ENCODE measurements at regions of chr11 and their contacts with region 1.

Region 1: DNA sequence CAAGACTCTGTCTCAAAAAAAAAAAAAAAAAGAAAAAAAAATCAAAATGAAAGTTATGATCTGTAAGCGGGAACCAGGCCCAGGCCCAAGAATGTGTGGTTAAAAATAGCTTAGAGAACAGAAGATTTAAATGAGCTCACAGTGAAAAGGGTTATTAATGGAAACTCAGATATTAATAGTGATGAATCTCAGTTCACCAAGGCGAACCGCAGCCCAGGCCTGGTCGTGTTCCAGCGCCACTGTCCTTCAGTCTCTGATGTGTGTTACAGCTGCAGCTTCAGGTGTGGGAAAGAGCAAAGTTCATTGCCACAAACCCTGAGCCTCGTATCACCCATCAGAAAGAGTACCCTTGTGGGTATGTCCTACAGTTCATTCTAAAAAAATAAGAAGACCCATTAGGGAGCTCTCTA is 107.1 kb downstream of the GAB2 start:
- DNase-seq: peak; percentile 12 to 40
- ATAC-seq: peak; percentile 76 to 81
- H3K4me3 ChIP-seq: peak overlapping the region in 3 of 4 donors; percentile 23 to 36 (median 33)
- H3K27ac ChIP-seq: peak overlapping the region in 3 of 4 donors; percentile 44 to 76 (median 58)
- H3K4me1 ChIP-seq: peaks cover 31 to 40% of the 10 kb centered on the region in 2 donors
- H3K27me3 ChIP-seq: no peaks in the 10 kb centered on the region
- CTCF ChIP-seq: no peak
- POLR2A ChIP-seq: no peak

Region 2: GRCh38 chr11:77695417-77695816 is 615.1 kb before region 1 on chr11:
- in situ Hi-C with region 1: no loop called
- intact Hi-C with region 1: no loop called
- DNase-seq: no peak
- ATAC-seq: peak; percentile 68 to 69
- H3K4me3 ChIP-seq: no peak overlapping the region
- H3K27ac ChIP-seq: peak overlapping the region; percentile 36 to 60 (median 42)
- H3K4me1 ChIP-seq: peaks cover 0 to 4% of the 10 kb centered on the region in 2 donors
- H3K27me3 ChIP-seq: no peaks in the 10 kb centered on the region
- CTCF ChIP-seq: no peak
- POLR2A ChIP-seq: no peak

Region 3: GRCh38 chr11:78295991-78296935 is 14.2 kb before region 1 on chr11:
- in situ Hi-C with region 1: no loop called
- intact Hi-C with region 1: loop called (anchors 2 kb)
- DNase-seq: no peak
- ATAC-seq: peak in 1 of 2 donors; percentile 60
- H3K4me3 ChIP-seq: no peak overlapping the region
- H3K27ac ChIP-seq: peak overlapping the region in 3 of 4 donors; percentile 47 to 81 (median 68)
- H3K4me1 ChIP-seq: peaks cover 7 to 13% of the 10 kb centered on the region in 2 donors
- H3K27me3 ChIP-seq: no peaks in the 10 kb centered on the region
- CTCF ChIP-seq: no peak
- POLR2A ChIP-seq: peak in 1 of 2 donors; percentile 19